Heart right ventricle (tissue), 16 donors: ENCODE measurements at regions of chr18 and their contacts with region 1.

Region 1: DNA sequence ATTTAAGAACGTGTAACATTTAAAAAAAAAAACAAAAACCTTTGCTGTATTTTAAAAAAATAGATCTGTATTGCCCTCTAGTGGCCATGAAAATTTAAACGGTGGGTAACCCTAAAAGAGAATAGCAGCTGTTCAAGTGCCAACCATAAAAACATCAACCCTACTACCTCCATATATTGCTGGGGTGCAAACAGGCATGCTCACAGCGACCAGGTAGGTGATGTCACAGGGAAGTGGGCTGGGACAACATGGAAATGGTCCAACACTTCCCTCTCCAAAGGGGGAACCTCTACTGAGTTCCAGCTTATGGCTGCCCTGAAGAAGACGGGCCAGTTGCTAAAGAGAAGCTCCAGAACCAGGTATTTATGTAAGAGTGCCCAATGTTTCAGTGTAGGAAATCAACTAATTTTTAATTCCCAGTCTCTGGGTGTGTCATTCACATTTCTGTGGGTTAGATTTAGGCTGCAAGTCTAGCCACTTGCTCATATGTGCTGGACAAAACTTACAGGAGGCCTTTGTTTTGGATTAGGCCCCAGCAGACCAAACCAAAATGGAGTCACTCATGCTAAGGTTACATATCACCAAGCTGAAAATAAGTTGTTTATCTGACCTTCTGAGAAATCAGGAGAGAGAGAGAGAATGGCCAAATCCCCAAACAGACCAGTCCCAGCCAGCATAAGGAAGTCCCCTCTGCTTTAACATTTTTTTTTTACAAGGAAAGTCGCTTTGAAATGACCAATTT is 54.5 kb downstream of the SKA1 start:
- DNase-seq: no peak
- ATAC-seq: no peak
- H3K4me3 ChIP-seq: no peak overlapping the region
- H3K27ac ChIP-seq: no peak overlapping the region
- H3K4me1 ChIP-seq: peaks cover 0 to 5% (median 0%) of the 10 kb centered on the region in 9 donors
- H3K27me3 ChIP-seq: no peaks in the 10 kb centered on the region
- CTCF ChIP-seq: peak; percentile 15 to 64 (median 54)

Region 2: GRCh38 chr18:50079581-50080295 is 349.6 kb before region 1 on chr18:
- intact Hi-C with region 1: loop called in 1 of 10 experiments (anchors 10 kb)
- DNase-seq: peak; percentile 73 to 78
- ATAC-seq: peak; percentile 86 to 99 (median 96)
- H3K4me3 ChIP-seq: no peak overlapping the region
- H3K27ac ChIP-seq: no peak overlapping the region
- H3K4me1 ChIP-seq: peaks cover 0 to 8% (median 0%) of the 10 kb centered on the region in 9 donors
- H3K27me3 ChIP-seq: peaks cover 0 to 7% (median 0%) of the 10 kb centered on the region in 7 donors
- CTCF ChIP-seq: no peak

Region 3: GRCh38 chr18:50240083-50240563 is 189.3 kb before region 1 on chr18:
- intact Hi-C with region 1: no loop called
- DNase-seq: no peak
- ATAC-seq: no peak
- H3K4me3 ChIP-seq: no peak overlapping the region
- H3K27ac ChIP-seq: no peak overlapping the region
- H3K4me1 ChIP-seq: no peaks in the 10 kb centered on the region
- H3K27me3 ChIP-seq: peaks cover 0 to 2% (median 0%) of the 10 kb centered on the region in 7 donors
- CTCF ChIP-seq: no peak

Region 4: DNA sequence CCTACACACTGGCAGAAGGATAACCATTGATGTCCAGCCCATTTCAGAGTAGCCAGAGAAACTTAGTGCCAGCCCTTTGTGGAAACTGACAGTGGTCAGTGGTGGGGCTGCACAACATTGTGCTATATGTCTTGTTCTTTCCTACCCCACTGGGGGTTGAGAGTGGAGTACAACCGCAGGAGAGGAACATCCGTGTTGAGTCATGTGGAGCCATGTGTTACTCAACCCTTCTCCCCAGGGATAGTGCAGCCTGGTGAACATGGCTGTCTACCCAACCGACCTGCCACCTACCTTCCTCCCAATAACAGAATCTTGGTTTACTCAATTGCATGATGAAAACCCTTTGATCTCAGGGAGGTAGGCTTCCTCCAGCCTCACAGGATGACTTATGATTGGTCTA is 65.2 kb after region 1 on chr18:
- intact Hi-C with region 1: no loop called
- DNase-seq: no peak
- ATAC-seq: no peak
- H3K4me3 ChIP-seq: no peak overlapping the region
- H3K27ac ChIP-seq: no peak overlapping the region
- H3K4me1 ChIP-seq: no peaks in the 10 kb centered on the region
- H3K27me3 ChIP-seq: no peaks in the 10 kb centered on the region
- CTCF ChIP-seq: no peak

Region 5: GRCh38 chr18:51630706-51631105 is 1201.3 kb after region 1 on chr18:
- intact Hi-C with region 1: no loop called
- DNase-seq: no peak
- ATAC-seq: no peak
- H3K4me3 ChIP-seq: no peak overlapping the region
- H3K27ac ChIP-seq: no peak overlapping the region
- H3K4me1 ChIP-seq: no peaks in the 10 kb centered on the region
- H3K27me3 ChIP-seq: no peaks in the 10 kb centered on the region
- CTCF ChIP-seq: no peak